ENCODE measurements at regions of chr2 and their contacts with region 1.

Region 1: GRCh38 chr2:237474931-237475703 is 11.9 kb upstream of the MLPH start:
- DNase-seq: peak; percentile 75 to 88
- ATAC-seq: peak; percentile 84

Region 2: DNA sequence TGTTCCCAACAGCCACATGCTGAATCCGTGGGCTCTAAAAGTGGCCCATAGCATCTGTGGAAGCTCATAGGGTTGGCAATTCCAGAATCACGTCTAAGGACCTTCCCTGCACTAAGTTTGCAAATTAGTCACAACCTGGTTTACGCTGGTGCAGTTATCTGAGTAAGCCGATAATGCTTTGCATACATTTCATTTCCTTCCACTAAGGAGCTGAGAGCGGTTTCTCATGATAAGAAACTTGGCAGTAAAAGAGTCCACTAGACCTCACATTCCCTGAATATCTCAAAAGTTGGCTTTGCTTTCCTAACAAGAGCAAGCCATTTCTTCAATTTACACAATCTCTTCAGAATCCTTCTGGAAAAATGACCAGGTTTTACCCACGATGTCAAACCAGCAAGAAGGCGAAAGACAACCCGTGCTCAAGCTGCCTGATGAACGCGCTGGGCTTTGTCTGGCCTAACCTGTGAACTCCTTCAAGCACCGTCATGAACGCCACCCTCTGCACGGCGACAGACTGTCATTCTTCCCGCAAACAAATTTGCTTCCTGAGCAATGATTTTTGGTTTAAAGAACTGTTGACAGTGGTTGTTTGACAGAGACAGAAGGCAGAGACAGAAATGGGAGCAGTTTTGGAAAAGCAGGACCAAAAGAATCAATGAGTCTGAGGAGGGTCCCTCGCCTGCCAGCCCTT is 462.4 kb before region 1 on chr2:
- intact Hi-C with region 1: no loop called
- DNase-seq: no peak
- ATAC-seq: no peak

Region 3: DNA sequence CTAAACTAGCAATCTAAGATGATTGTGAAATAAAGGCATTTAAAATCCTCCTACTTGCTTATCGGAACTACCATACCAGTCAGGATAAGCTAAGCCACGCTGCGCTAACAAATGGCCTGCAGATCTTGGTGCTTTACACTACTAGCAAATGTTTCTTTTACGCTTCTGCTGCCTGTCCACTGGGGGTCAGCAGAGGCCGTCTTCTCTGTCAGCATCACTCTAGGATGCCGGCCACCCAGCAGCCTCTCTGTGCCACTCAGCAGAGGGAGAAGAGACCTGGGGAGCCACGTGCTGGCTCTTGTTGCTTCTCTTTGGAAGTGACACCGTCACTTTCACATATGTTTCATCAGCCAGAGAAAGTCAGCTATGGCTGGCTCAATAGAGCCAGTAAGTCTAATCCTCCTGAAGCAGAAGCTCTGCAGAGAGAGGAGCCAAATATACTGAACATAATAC is 352.9 kb before region 1 on chr2:
- intact Hi-C with region 1: loop called in 1 of 2 experiments (anchors 10 kb)
- DNase-seq: peak; percentile 35 to 45
- ATAC-seq: peak; percentile 75

Region 4: GRCh38 chr2:237165405-237166276 is 309.5 kb before region 1 on chr2:
- intact Hi-C with region 1: loop called in 1 of 2 experiments (anchors 10 kb)
- DNase-seq: no peak
- ATAC-seq: no peak

Region 5: DNA sequence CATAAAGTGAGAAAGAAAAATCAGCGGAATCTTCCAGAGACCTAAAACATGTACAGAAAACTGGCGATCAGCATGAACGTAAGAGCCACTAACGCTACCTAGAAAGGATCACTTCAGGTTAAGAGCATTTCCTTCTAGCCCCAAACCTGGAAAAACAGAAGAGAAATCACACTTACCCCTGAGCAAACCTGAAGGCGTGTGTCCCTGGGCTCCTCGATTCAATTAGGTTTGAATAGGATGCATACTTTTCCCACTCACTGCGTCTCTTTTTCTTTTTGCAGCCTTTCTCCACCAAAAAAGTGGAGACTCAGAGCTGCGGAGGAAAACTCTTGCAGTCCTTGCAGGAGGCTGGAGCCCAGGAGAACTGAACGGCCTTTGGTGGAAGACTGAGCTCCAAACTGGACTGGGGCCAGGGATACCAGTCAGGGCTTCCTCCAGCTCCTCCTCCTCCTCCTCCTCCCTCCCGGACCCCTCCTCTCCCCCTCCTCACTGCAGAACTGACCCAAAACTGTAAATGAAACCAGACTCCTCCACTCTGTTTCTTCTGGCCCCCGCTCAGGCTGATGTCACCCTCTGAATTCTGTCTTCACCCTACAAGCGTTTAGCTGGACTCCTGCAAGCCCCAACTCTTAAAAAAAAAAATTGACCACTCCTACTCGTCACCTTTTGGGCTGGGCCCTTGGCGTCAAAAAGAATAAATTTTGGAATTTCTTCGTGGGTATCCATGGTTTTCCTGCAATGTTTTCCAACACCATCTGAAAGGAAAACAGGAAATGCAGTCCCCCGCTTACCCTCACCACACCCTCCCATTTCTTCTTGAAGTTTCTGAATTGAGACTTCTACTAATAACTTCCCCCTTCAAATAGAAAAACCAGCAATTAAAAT is 61.1 kb before region 1 on chr2 and contains the start of gene COL6A3:
- intact Hi-C with region 1: no loop called
- DNase-seq: peak; percentile 54 to 69
- ATAC-seq: no peak
- total RNA-seq, gene COL6A3: 22.6 to 79.5 TPM